ENCODE measurements at regions of chr14 and their contacts with region 1.

Region 1: DNA sequence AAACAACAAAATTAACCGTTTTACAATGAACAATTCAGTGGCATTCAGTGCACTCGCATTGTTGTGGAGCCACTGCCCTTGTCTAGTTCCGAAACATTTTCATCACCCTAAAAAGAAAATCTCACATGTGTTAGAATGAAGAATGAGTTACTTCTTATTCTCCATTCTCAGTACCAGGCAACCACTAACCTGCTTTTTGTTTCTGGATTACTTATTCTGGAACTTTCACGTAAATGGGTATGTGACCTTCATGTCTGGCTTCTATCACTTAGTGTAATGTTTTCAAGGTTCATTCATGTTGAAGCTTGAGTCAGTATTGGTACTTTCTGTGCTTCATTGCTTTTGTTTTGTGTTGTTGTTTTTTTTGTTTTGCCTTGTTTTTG is 15.6 kb downstream of the RCOR1 start:
- DNase-seq: no peak
- ATAC-seq: no peak
- H3K4me3 Mint-ChIP-seq: no peak overlapping the region
- H3K27ac Mint-ChIP-seq: no peak overlapping the region
- H3K4me1 Mint-ChIP-seq: peaks cover 78% of the 10 kb centered on the region
- H3K27me3 Mint-ChIP-seq: no peaks in the 10 kb centered on the region
- CTCF ChIP-seq: no peak

Region 2: DNA sequence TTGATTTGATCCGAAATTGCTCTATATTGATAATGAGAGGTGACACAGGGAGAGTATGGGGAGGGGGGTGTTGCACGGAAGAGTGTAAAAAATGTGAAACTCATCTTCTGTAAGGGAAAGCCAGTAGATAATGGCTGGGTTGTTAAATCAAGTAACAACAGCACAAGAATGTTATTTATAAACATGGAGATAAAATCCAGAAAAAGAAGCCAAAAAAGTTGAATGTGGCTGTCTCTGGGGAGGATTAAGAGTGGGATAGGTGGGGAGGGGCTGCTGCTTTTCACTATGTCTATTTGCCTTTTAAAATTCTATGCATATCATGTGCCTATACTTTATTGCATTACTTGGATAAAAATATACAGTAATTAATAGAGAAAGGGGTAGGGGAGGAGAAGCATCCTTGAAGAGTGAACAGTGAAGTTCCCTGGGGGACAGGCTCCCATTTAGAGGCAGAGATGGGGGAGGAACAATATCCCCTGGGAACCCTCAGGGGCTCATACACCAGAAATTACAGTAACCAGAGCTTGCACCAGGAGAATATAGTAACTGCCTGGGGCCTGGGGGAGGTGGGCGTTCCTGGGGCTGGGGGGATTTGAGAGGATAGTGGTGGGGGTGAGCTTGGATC is 59.3 kb before region 1 on chr14:
- CTCF ChIA-PET with region 1: no interaction called
- POLR2A ChIA-PET with region 1: no interaction called
- intact Hi-C with region 1: no loop called
- DNase-seq: no peak
- ATAC-seq: no peak
- H3K4me3 Mint-ChIP-seq: no peak overlapping the region
- H3K27ac Mint-ChIP-seq: no peak overlapping the region
- H3K4me1 Mint-ChIP-seq: peaks cover 11% of the 10 kb centered on the region
- H3K27me3 Mint-ChIP-seq: peaks cover 25% of the 10 kb centered on the region
- CTCF ChIP-seq: no peak

Region 3: GRCh38 chr14:102644523-102644922 is 36.5 kb after region 1 on chr14:
- CTCF ChIA-PET with region 1: no interaction called
- POLR2A ChIA-PET with region 1: no interaction called
- intact Hi-C with region 1: loop called (anchors 5 kb)
- DNase-seq: no peak
- ATAC-seq: no peak
- H3K4me3 Mint-ChIP-seq: peak overlapping the region; percentile 20
- H3K27ac Mint-ChIP-seq: peak overlapping the region; percentile 31
- H3K4me1 Mint-ChIP-seq: peaks cover 61% of the 10 kb centered on the region
- H3K27me3 Mint-ChIP-seq: no peaks in the 10 kb centered on the region
- CTCF ChIP-seq: no peak

Measured in activated B cell treated with CpG ODN at 0.5 μM for 24 hours (primary cell).